CD14-positive monocyte (primary cell): ENCODE measurements at regions of chr17 and their contacts with region 1.

Region 1: DNA sequence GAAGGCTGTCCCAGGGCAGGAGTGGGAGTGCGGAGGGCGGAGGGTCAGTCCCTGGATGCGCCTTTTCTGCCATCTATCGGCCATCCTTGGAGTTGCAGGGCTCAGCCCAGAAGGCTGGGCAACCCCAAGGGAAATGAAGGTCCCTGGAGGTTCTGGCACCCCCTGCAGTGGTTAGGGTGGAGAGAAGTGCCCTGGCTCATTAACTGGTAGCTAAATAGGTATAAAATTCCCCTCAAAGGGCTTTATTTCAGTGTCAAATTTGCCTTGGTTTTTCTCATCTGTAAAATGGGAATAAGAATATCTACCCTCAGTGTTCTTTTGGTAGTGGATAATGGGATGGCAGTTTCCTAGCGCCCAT is 22.4 kb downstream of the C17orf75 start:
- DNase-seq: peak; percentile 76 to 79 (median 77)
- H3K4me3 ChIP-seq: peak overlapping the region; percentile 31 to 68 (median 32)
- H3K4me3 Mint-ChIP-seq: peak overlapping the region; percentile 81 to 89
- H3K27ac ChIP-seq: peak overlapping the region; percentile 41 to 61
- H3K27ac Mint-ChIP-seq: peak overlapping the region; percentile 88 to 96 (median 93)
- H3K4me1 ChIP-seq: peaks cover 23 to 35% of the 10 kb centered on the region in 2 donors
- H3K4me1 Mint-ChIP-seq: peaks cover 35% of the 10 kb centered on the region
- H3K27me3 ChIP-seq: peaks cover 0 to 2% of the 10 kb centered on the region in 2 donors
- H3K27me3 Mint-ChIP-seq: peaks cover 2 to 8% (median 7%) of the 10 kb centered on the region in 3 donors
- CTCF ChIP-seq: peak; percentile 99

Region 2: GRCh38 chr17:32142038-32142856 is 177.3 kb before region 1 on chr17 and contains the start of gene RHOT1:
- intact Hi-C with region 1: loop called in 1 of 2 experiments (anchors 10 kb)
- DNase-seq: peak; percentile 63 to 85 (median 67)
- H3K4me3 ChIP-seq: peak within 1 kb of the TSS; percentile 64 to 100 (median 66)
- H3K4me3 Mint-ChIP-seq: peak within 1 kb of the TSS; percentile 99 to 100
- H3K27ac ChIP-seq: peak within 1 kb of the TSS; percentile 91 to 93
- H3K27ac Mint-ChIP-seq: peak within 1 kb of the TSS; percentile 93 to 97 (median 95)
- H3K4me1 ChIP-seq: peaks cover 33 to 49% of the 10 kb centered on the region in 2 donors
- H3K4me1 Mint-ChIP-seq: peaks cover 51% of the 10 kb centered on the region
- H3K27me3 ChIP-seq: no peaks in the 10 kb centered on the region
- H3K27me3 Mint-ChIP-seq: peaks cover 0 to 1% (median 0%) of the 10 kb centered on the region in 3 donors
- CTCF ChIP-seq: peak; percentile 40
- polyA plus RNA-seq, gene RHOT1: 45.9 to 60.5 (median 51.9) TPM

Region 3: DNA sequence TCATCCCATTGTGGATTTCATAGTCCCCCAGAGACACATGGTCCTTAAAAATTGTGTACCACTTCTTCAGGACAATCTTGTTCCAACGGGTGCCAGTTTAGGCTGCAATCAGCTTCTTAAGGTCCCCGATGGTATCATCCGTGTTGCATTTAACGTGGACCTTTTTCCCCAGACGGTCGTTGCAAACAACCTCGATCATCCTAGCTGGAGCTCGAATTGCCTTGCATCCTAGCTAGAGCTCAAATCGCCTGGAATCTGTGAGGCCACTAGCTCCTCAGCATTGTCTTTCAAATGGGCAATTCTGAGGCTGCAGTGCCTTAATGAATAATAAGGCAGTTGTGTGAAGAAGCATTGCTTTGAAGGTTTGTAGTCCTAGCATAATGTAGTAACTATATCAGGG is 91.6 kb before region 1 on chr17:
- intact Hi-C with region 1: no loop called
- DNase-seq: no peak
- H3K4me3 ChIP-seq: no peak overlapping the region
- H3K4me3 Mint-ChIP-seq: no peak overlapping the region
- H3K27ac ChIP-seq: no peak overlapping the region
- H3K27ac Mint-ChIP-seq: no peak overlapping the region
- H3K4me1 ChIP-seq: no peaks in the 10 kb centered on the region
- H3K4me1 Mint-ChIP-seq: no peaks in the 10 kb centered on the region
- H3K27me3 ChIP-seq: no peaks in the 10 kb centered on the region
- H3K27me3 Mint-ChIP-seq: no peaks in the 10 kb centered on the region
- CTCF ChIP-seq: no peak

Region 4: GRCh38 chr17:32253117-32253611 is 66.4 kb before region 1 on chr17:
- intact Hi-C with region 1: loop called (anchors 1 to 5 kb)
- DNase-seq: peak; percentile 67 to 78 (median 77)
- H3K4me3 ChIP-seq: no peak overlapping the region
- H3K4me3 Mint-ChIP-seq: no peak overlapping the region
- H3K27ac ChIP-seq: no peak overlapping the region
- H3K27ac Mint-ChIP-seq: no peak overlapping the region
- H3K4me1 ChIP-seq: no peaks in the 10 kb centered on the region
- H3K4me1 Mint-ChIP-seq: peaks cover 2% of the 10 kb centered on the region
- H3K27me3 ChIP-seq: peaks cover 0 to 3% of the 10 kb centered on the region in 2 donors
- H3K27me3 Mint-ChIP-seq: peaks cover 8 to 14% (median 9%) of the 10 kb centered on the region in 3 donors
- CTCF ChIP-seq: peak; percentile 99

Region 5: DNA sequence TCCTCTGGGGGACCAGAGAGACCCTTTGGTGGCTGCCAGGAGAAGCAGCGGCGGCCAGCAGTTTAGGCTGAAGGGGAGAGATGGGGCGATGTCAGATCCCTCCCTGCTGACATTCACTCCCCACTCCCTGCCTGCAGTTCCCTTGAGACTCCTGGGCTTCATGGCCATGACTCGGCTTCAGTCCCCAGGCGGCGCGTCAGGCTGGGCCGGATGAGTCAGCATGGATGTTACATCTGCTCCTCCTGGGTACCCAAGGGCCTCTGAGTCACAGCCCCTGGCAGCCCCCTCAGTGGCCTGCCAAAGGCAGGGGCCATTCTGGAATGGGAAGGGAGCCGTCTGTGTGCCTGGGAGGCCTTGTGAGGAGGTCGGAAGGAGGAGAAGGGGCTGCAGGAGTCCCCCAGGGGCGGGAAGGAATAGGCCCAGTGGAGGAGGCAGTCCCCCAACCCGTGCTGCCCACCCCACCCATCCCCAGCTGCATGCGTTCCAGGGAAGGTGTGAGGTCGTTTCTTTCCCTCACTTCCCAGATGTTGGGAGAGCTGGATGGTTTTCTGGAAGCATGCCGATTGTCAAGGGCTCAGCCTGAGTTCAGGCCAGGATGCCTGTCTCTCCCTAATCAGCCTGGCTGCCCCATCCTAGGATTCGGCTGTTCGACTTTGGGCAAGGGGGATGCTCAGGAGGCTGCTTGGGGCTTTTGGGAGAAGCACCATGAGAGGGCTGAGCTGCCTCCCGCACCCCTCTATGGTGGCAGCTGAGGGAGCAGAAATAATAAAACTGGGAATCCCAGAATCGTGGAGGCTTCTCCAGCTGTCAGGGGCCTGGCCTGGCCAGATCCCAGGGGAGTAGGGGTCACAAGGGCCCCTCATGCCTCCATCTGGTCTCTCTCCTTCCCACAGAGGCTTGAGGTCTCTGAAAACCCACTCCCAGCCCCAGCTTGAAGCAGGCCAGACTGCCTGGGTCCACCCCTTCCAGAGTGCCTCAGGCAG is 44.2 kb before region 1 on chr17:
- intact Hi-C with region 1: loop called in 1 of 2 experiments (anchors 1 kb)
- DNase-seq: peak; percentile 54 to 91 (median 79)
- H3K4me3 ChIP-seq: no peak overlapping the region
- H3K4me3 Mint-ChIP-seq: peak overlapping the region; percentile 54 to 59
- H3K27ac ChIP-seq: peak overlapping the region in 1 of 2 donors; percentile 56
- H3K27ac Mint-ChIP-seq: peak overlapping the region; percentile 14 to 93 (median 87)
- H3K4me1 ChIP-seq: peaks cover 26 to 30% of the 10 kb centered on the region in 2 donors
- H3K4me1 Mint-ChIP-seq: peaks cover 41% of the 10 kb centered on the region
- H3K27me3 ChIP-seq: peaks cover 5 to 21% of the 10 kb centered on the region in 2 donors
- H3K27me3 Mint-ChIP-seq: peaks cover 36 to 42% (median 41%) of the 10 kb centered on the region in 3 donors
- CTCF ChIP-seq: no peak